ENCODE measurements at regions of chr6 and their contacts with region 1.

Region 1: GRCh38 chr6:44074439-44075136 is 52.7 kb downstream of the MRPL14 start:
- DNase-seq: peak; percentile 64
- ATAC-seq: peak; percentile 51
- H3K4me3 Mint-ChIP-seq: peak overlapping the region; percentile 77
- H3K27ac Mint-ChIP-seq: peak overlapping the region; percentile 31; the same call in 1 of the 2 replicates
- H3K4me1 Mint-ChIP-seq: peaks cover 45% of the 10 kb centered on the region
- H3K27me3 Mint-ChIP-seq: no peaks in the 10 kb centered on the region; the same call in 1 of the 2 replicates
- CTCF ChIP-seq: peak; percentile 85; the same call in 1 of the 2 replicates

Region 2: DNA sequence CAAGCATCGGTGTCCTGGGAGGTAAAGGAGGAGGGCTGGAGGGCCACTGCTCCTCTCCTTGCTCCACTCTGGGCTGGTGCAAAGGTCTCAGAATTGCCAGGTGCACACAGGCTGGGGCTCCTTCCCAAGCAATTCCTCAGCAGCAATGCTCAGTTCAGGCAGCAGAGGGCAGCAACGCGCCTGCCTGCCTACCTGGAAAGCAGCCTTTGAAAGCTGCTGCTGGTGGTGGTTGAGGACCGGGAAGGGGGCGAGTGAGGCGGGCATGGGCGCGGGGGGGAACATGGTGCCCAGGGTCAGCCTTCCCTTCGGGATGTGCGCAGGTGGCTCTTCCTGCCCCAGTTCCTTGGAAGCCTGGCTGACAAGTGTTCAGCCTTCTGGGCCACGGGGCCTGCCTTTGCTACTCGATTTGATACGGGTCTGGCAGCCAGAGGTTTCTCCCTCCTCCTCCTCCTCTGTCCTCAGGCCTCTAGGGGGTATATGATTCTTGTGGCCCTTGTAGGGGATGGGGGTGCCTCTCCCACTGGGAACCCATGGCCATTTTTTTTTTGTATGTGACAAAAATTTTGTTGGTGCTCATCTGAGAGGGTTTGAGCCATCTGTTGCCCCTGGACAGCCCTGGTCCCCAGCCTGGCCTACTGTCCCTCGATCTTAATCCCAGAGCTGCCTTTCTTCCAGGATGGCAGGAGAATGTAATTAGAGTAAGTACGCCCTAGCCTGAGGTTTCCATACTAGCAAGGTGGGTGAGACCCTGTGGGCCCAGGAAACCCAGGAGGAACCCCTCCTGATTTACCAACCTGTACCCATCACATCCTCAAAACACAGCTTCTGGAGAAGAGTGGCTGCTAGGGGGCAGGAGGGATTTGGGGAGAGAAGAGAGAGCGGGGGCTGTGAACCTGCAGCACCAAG is 407.1 kb before region 1 on chr6:
- CTCF ChIA-PET with region 1: interaction called, 52 read pairs
- POLR2A ChIA-PET with region 1: no interaction called
- DNase-seq: peak; percentile 88
- ATAC-seq: peak; percentile 63
- H3K4me3 Mint-ChIP-seq: peak overlapping the region; percentile 55
- H3K27ac Mint-ChIP-seq: peak overlapping the region; percentile 7; the same call in 1 of the 2 replicates
- H3K4me1 Mint-ChIP-seq: peaks cover 36% of the 10 kb centered on the region
- H3K27me3 Mint-ChIP-seq: peaks cover 9% of the 10 kb centered on the region
- CTCF ChIP-seq: peak; percentile 81

Region 3: DNA sequence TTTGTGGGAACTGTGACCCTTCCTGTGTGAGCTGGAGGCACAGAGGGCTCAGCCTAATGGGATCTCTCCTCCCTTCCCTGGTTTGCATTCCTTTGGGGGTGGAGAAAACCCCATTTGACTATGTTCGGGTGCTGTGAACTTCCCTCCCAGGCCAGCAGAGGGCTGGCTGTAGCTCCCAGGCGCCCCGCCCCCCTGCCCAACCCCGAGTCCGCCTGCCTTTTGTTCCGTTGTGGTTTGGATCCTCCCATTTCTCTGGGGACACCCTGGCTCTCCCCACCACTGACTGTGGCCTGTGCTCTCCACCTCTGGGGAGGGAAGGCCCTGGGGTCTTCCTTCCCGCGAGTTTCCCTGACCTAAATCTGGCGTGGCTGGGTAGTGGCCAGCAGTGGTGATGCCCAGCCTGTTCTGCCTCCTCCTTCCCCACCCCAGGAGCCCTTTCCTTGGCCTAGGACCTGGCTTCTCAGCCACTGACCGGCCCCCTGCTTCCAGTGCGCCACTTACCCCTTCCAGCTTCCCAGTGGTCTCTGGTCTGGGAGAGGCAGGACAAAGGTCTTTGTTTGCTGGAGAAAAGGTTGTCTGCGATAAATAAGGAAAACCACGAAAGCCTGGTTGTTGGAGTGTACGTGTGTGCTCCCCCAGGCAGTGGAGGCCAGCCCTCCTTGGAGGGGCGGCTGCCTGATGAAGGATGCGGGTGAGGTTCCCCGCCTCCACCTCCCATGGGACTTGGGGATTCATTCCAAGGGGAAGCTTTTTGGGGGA is 299.6 kb before region 1 on chr6:
- CTCF ChIA-PET with region 1: interaction called, 58 read pairs
- POLR2A ChIA-PET with region 1: interaction called, 6 read pairs
- DNase-seq: peak; percentile 85
- ATAC-seq: peak; percentile 46
- H3K4me3 Mint-ChIP-seq: peak overlapping the region; percentile 48
- H3K27ac Mint-ChIP-seq: peak overlapping the region; percentile 82
- H3K4me1 Mint-ChIP-seq: peaks cover 33% of the 10 kb centered on the region
- H3K27me3 Mint-ChIP-seq: peaks cover 2% of the 10 kb centered on the region; the same call in 1 of the 2 replicates
- CTCF ChIP-seq: peak; percentile 82

Region 4: DNA sequence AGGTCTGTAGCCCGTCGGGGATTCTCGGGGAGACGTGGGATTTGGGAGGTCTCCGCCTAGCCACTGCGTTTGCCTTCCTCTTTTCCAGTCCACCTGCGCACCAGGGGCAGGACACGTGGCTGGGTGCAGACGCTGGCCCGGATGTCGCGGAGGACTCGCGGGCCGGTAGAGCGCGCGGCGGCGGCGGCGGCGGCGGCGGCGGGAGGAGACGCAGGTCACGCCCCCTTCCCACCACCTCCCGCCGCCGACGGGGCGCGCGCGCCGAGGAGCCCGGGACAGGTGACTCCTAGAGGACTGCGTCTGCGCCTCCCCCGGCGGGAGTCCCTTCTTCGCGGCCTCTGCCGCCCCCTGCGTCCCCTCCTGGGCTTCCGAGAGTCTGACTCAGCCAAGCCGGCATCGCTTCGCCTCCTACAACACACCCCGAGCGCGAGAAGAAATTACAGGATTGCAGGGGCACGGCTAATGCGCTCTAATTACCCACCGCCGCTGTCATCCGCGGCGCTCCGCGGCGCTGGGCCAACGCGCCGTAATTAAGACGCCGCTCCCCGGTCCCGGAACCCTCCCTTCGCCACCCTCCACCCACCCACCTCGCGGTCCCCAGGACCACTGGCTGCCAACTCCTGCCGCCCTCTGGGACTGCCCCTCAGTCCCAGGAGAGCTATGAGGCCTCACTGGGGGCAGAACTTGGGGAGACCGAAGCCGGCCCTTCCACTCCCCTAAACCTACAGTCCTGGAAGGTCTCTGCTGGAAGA is 71.8 kb before region 1 on chr6:
- CTCF ChIA-PET with region 1: interaction called, 58 read pairs
- POLR2A ChIA-PET with region 1: interaction called, 4 read pairs
- DNase-seq: peak; percentile 78
- ATAC-seq: peak; percentile 12
- H3K4me3 Mint-ChIP-seq: peak overlapping the region; percentile 69
- H3K27ac Mint-ChIP-seq: no peak overlapping the region
- H3K4me1 Mint-ChIP-seq: peaks cover 66% of the 10 kb centered on the region
- H3K27me3 Mint-ChIP-seq: peaks cover 37% of the 10 kb centered on the region
- CTCF ChIP-seq: no peak

Region 5: DNA sequence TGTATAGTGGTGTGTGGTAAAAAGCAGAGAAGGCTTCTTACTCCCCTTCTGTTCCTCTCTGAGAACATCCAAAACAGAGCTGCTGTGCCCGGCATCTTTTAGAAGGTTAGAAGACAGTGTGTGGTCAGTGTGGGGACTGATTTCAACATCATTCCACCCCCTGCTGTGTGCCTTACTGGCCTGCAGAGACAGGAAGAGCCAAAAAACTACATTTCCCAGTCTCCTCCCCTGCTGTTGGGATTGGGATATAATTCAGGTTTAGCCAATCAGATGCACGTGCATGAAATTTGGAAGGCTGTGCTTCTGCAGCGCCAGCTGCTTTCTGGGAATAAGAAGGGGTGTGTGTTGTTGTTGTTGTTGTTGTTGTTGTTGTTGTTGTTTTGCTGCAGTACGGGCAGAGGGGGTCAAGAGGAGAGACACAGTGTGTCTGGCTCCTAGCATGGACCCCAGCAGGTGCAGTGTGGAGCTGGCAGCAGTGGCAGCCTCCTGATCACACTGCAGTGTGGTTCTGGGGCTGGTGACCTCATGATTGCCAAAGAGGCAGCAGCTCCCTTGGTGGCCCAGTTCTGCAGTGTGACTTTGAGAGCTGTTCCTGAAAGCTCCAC is 22.1 kb before region 1 on chr6:
- CTCF ChIA-PET with region 1: interaction called, 12 read pairs
- POLR2A ChIA-PET with region 1: interaction called, 3 read pairs
- DNase-seq: peak; percentile 60
- ATAC-seq: peak; percentile 82
- H3K4me3 Mint-ChIP-seq: no peak overlapping the region
- H3K27ac Mint-ChIP-seq: peak overlapping the region; percentile 10; the same call in 1 of the 2 replicates
- H3K4me1 Mint-ChIP-seq: peaks cover 25% of the 10 kb centered on the region
- H3K27me3 Mint-ChIP-seq: no peaks in the 10 kb centered on the region
- CTCF ChIP-seq: no peak

Region 6: DNA sequence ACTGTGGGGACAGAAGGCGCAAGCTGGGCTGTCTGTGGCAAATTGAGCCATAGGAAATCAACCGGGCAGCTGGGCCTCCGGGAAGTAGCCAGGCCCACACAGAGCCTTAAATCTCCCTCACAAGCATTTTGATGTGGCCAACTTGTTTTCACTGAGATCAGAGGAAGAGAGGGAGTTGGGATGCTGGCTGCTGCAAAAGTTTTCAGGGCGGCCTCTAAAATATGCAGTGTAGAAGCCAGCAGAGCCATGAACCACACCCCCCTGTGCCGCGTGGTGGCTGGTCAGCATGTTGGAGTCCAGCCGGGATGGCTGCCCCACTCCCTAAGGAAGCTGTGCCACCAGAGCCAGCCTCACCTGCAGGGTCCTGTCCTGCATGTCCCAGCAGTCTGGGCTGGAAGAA is 480.3 kb after region 1 on chr6:
- CTCF ChIA-PET with region 1: no interaction called
- POLR2A ChIA-PET with region 1: no interaction called
- DNase-seq: no peak
- ATAC-seq: no peak
- H3K4me3 Mint-ChIP-seq: no peak overlapping the region
- H3K27ac Mint-ChIP-seq: no peak overlapping the region
- H3K4me1 Mint-ChIP-seq: peaks cover 12% of the 10 kb centered on the region
- H3K27me3 Mint-ChIP-seq: no peaks in the 10 kb centered on the region
- CTCF ChIP-seq: no peak